Caco-2 (cell line): ENCODE measurements at regions of chr1 and their contacts with region 1.

Region 1: DNA sequence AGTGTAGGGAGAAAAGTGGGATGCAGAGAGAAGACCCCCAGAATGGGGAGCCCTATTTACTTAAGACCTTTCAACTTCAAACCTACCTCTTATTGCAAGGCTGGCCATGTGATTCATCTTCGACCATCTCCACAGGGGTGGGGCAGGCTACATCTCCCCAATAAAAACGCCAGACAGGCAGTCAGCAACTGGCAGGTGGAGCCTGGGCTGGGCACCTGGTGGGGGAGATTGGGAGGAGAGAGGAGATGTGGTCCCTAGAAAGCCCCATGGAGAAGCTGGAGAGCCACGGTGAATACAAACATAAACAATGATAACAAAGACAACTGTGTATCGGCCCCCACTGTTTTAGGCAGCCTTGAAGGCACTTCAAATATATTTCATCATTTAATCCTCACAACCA is 336.7 kb upstream of the PROX1 start:
- DNase-seq: no peak
- H3K4me3 ChIP-seq: no peak overlapping the region
- H3K4me3 Mint-ChIP-seq: no peak overlapping the region
- H3K27ac Mint-ChIP-seq: no peak overlapping the region
- H3K4me1 ChIP-seq: peaks cover 33% of the 10 kb centered on the region
- H3K4me1 Mint-ChIP-seq: peaks cover 28% of the 10 kb centered on the region
- H3K27me3 ChIP-seq: no peaks in the 10 kb centered on the region
- H3K27me3 Mint-ChIP-seq: no peaks in the 10 kb centered on the region
- CTCF ChIP-seq: no peak

Region 2: DNA sequence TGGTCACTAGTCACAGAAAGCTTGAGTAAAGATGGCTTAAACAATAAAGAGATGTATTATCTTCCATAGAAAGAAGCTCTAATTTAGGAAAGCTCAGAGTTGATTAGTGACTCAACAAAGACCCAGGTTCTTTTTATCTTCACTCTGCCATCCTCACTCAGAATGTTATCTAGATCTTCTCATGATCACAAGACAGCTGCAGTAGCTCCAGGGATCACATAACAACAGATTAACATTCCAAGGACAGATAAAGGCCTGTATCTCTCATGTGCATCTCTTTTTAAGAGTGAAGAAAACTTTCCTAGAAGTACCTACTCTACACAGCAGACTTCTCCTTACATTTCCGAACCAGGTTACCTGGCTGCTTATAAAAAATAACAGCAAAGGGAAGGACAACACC is 32.1 kb before region 1 on chr1:
- CTCF ChIA-PET with region 1: no interaction called
- POLR2A ChIA-PET with region 1: no interaction called
- intact Hi-C with region 1: loop called (anchors 2 kb)
- DNase-seq: peak in 1 of 2 experiments; percentile 46
- H3K4me3 ChIP-seq: no peak overlapping the region
- H3K4me3 Mint-ChIP-seq: no peak overlapping the region
- H3K27ac Mint-ChIP-seq: peak overlapping the region; percentile 74
- H3K4me1 ChIP-seq: peaks cover 57% of the 10 kb centered on the region
- H3K4me1 Mint-ChIP-seq: peaks cover 50% of the 10 kb centered on the region
- H3K27me3 ChIP-seq: no peaks in the 10 kb centered on the region
- H3K27me3 Mint-ChIP-seq: no peaks in the 10 kb centered on the region
- CTCF ChIP-seq: no peak